ENCODE measurements at regions of chr15 and their contacts with region 1.

Region 1: GRCh38 chr15:94324117-94324826 is 92.9 kb downstream of the MCTP2 start:
- DNase-seq: peak; percentile 48
- H3K4me3 ChIP-seq: no peak overlapping the region
- H3K27ac ChIP-seq: no peak overlapping the region
- H3K27me3 ChIP-seq: no peaks in the 10 kb centered on the region
- CTCF ChIP-seq: peak; percentile 95

Region 2: GRCh38 chr15:94163999-94164807 is 160.1 kb before region 1 on chr15:
- CTCF ChIA-PET with region 1: interaction called, 366 read pairs
- POLR2A ChIA-PET with region 1: no interaction called
- DNase-seq: peak; percentile 49
- H3K4me3 ChIP-seq: no peak overlapping the region
- H3K27ac ChIP-seq: no peak overlapping the region
- H3K27me3 ChIP-seq: no peaks in the 10 kb centered on the region
- CTCF ChIP-seq: peak; percentile 83

Region 3: GRCh38 chr15:94230956-94231722 is 93.1 kb before region 1 on chr15 and contains the start of gene MCTP2:
- CTCF ChIA-PET with region 1: interaction called, 18 read pairs
- POLR2A ChIA-PET with region 1: no interaction called
- DNase-seq: peak; percentile 39
- H3K4me3 ChIP-seq: peak within 1 kb of the TSS; percentile 65
- H3K27ac ChIP-seq: peak within 1 kb of the TSS; percentile 84
- H3K27me3 ChIP-seq: no peaks in the 10 kb centered on the region
- CTCF ChIP-seq: 0 out of 2 replicates have a peak, but pooled peaks have one; percentile 12
- polyA plus RNA-seq, gene MCTP2: 17.8 and 18.1 TPM in 2 replicates

Region 4: DNA sequence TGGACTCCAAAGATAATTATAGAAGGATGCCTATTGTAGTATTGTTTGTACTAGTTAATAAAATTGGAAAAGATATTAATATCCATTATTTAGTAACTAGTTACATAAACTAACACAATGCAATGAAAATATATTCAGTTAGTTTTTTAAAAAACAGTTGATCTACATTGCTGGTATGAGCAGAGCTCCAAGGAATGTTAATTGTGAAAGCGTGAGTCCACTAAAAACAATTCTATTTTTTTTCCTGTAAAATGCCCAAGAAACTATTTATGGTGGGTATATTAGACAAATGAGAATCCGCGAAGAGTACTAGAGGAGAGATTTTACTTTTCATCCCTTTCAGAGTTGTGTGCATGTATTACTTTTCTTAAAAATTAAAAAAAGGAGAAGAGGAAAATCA is 11.3 kb after region 1 on chr15:
- CTCF ChIA-PET with region 1: interaction called, 72 read pairs
- POLR2A ChIA-PET with region 1: no interaction called
- DNase-seq: no peak
- H3K4me3 ChIP-seq: no peak overlapping the region
- H3K27ac ChIP-seq: no peak overlapping the region
- H3K27me3 ChIP-seq: peaks cover 3% of the 10 kb centered on the region
- CTCF ChIP-seq: no peak

Region 5: GRCh38 chr15:94692670-94693069 is 368.4 kb after region 1 on chr15:
- CTCF ChIA-PET with region 1: no interaction called
- POLR2A ChIA-PET with region 1: no interaction called
- DNase-seq: no peak
- H3K4me3 ChIP-seq: no peak overlapping the region
- H3K27ac ChIP-seq: no peak overlapping the region
- H3K27me3 ChIP-seq: no peaks in the 10 kb centered on the region
- CTCF ChIP-seq: no peak

Measured in AG04450 (cell line).